Left cardiac atrium (tissue), 4 donors: ENCODE measurements at regions of chr5 and their contacts with region 1.

Region 1: DNA sequence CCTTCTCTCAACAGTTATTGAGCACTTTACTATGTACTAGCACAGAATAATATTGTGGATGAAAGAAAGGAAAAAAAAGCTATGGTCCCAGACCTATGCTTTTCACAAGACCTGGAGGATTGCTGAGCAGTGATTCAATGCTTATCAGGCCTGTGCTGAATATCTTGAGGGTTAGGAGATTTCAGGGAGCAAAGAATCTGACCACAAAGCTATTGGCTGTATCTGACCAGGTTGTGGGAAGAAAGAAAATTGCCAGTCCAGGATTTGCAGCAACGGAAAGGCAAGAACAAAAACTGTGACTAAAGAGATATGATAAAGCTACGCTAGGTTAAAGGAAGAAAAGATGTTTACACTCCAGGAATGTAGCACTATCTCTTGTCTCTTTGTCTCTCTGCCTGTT is 14.9 kb upstream of the MACIR start:
- DNase-seq: no peak
- ATAC-seq: no peak

Region 2: GRCh38 chr5:102971697-102972293 is 271.9 kb before region 1 on chr5:
- intact Hi-C with region 1: no loop called
- DNase-seq: no peak
- ATAC-seq: peak; percentile 18 to 51

Region 3: GRCh38 chr5:103188436-103188835 is 55.2 kb before region 1 on chr5:
- intact Hi-C with region 1: loop called in 1 of 2 experiments (anchors 10 kb)
- DNase-seq: no peak
- ATAC-seq: no peak